CD8-positive, alpha-beta T cell (primary cell): ENCODE measurements at regions of chr2 and their contacts with region 1.

Region 1: DNA sequence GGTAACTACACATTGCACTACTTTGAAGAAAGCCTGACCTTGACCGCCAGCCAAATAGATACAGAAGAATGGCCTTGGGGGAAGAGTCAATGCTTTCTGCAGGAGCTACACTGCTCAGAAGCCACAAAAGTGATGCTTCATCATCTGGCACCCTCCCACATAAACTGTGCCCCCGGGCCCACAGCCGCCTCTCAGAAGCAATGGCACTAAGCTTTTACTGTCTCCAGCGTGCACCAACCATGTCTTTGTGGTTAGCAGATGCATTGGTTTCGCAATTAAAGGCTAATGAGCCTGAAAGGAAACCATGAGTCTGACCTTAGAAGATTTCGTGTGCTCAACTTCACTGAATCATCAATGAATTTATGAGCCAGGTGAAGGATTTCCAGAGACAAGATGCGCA is 209.4 kb upstream of the TRIB2 start:
- DNase-seq: peak in 7 of 9 experiments; percentile 40 to 74 (median 63)
- ATAC-seq: peak; percentile 92
- H3K4me3 ChIP-seq: peak overlapping the region in 1 of 2 experiments; percentile 1
- H3K4me3 Mint-ChIP-seq: peak overlapping the region; percentile 50
- H3K27ac ChIP-seq: peak overlapping the region in 1 of 2 experiments; percentile 61
- H3K27ac Mint-ChIP-seq: no peak overlapping the region
- H3K4me1 ChIP-seq: peaks cover 56% of the 10 kb centered on the region
- H3K4me1 Mint-ChIP-seq: peaks cover 92% of the 10 kb centered on the region
- H3K27me3 ChIP-seq: no peaks in the 10 kb centered on the region
- H3K27me3 Mint-ChIP-seq: no peaks in the 10 kb centered on the region
- CTCF ChIP-seq: no peak

Region 2: GRCh38 chr2:12456293-12457151 is 50.8 kb before region 1 on chr2:
- CTCF ChIA-PET with region 1: no interaction called
- POLR2A ChIA-PET with region 1: no interaction called
- intact Hi-C with region 1: loop called in 1 of 2 experiments (anchors 5 kb)
- DNase-seq: peak; percentile 23 to 76 (median 47)
- ATAC-seq: peak; percentile 81
- H3K4me3 ChIP-seq: peak overlapping the region; percentile 37 to 50
- H3K4me3 Mint-ChIP-seq: peak overlapping the region; percentile 83
- H3K27ac ChIP-seq: peak overlapping the region; percentile 39 to 78
- H3K27ac Mint-ChIP-seq: peak overlapping the region; percentile 95
- H3K4me1 ChIP-seq: peaks cover 14% of the 10 kb centered on the region
- H3K4me1 Mint-ChIP-seq: peaks cover 36% of the 10 kb centered on the region
- H3K27me3 ChIP-seq: no peaks in the 10 kb centered on the region
- H3K27me3 Mint-ChIP-seq: no peaks in the 10 kb centered on the region
- CTCF ChIP-seq: no peak

Region 3: DNA sequence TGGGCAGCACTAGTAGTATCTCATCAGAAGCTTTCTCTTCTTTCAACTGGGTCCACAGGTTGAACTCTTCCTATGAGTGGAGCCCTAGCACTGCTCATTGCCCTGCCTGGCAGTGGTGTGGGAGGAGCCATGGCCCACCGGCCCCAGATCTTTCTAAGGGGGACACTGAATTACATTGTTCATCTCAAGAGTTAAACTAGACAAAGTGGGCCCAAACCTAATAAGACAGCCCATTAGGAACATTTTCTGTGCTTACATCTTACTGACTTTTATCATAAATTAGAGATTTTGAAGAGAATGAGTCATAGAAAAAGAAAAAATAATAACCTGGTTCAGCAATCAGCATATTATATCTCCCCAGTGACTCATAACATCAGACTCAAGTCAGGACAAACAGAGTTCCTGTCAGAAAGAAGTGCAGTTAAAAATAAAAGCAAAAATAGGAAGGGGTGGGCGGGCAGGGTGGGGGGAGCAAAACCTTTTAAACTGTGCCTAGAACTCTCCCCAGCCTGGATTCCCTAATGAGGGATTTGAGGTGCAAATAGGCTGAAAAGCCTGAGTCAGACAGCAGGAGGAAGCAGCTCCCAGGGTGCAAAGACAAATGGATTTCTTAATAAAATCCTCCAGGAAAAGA is 47.8 kb after region 1 on chr2:
- CTCF ChIA-PET with region 1: no interaction called
- POLR2A ChIA-PET with region 1: no interaction called
- intact Hi-C with region 1: loop called in 1 of 2 experiments (anchors 5 kb)
- DNase-seq: peak in 1 of 9 experiments; percentile 13
- ATAC-seq: peak; percentile 61
- H3K4me3 ChIP-seq: no peak overlapping the region
- H3K4me3 Mint-ChIP-seq: no peak overlapping the region
- H3K27ac ChIP-seq: no peak overlapping the region
- H3K27ac Mint-ChIP-seq: peak overlapping the region; percentile 53
- H3K4me1 ChIP-seq: peaks cover 25% of the 10 kb centered on the region
- H3K4me1 Mint-ChIP-seq: peaks cover 38% of the 10 kb centered on the region
- H3K27me3 ChIP-seq: no peaks in the 10 kb centered on the region
- H3K27me3 Mint-ChIP-seq: no peaks in the 10 kb centered on the region
- CTCF ChIP-seq: no peak